CD4-positive, alpha-beta T cell (primary cell): ENCODE measurements at regions of chr11 and their contacts with region 1.

Region 1: GRCh38 chr11:128290106-128290840 is 297.1 kb downstream of the ETS1 start:
- DNase-seq: peak; percentile 51 to 93 (median 66)
- ATAC-seq: peak; percentile 73
- H3K4me3 ChIP-seq: peak overlapping the region; percentile 50
- H3K4me3 Mint-ChIP-seq: peak overlapping the region; percentile 90
- H3K27ac ChIP-seq: peak overlapping the region; percentile 87 to 95
- H3K27ac Mint-ChIP-seq: peak overlapping the region; percentile 100
- H3K4me1 ChIP-seq: peaks cover 77% of the 10 kb centered on the region
- H3K4me1 Mint-ChIP-seq: peaks cover 100% of the 10 kb centered on the region
- H3K27me3 ChIP-seq: no peaks in the 10 kb centered on the region
- H3K27me3 Mint-ChIP-seq: no peaks in the 10 kb centered on the region
- CTCF ChIP-seq: peak; percentile 94

Region 2: DNA sequence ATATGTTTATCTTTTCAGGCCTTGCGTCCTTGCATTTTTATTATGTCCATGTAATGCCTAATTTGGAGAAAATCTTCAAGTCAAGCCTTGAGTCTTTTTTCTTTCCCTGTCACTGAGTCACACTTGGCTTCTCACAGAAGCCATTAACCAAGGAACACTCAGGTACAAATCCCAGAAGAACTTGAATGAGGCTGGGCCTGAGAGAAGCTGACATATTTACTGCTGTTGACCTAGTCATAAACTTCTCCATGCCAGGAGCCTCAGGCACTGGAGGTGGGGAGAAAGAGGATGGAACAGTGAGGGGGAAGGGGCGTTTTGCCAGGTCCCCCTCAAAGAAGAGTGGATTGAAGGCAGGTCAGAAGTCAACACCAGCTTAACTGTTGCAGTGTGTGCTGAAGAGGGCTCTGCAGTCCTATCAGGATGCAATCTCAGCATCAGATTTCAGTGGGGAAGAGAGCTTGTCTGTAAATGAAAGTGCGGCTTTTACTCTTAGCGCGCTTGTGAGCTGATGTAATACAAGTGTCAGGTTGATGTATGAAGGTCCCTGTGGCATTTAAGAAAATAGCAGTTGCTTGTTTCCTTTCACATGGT is 228.9 kb before region 1 on chr11:
- CTCF ChIA-PET with region 1: no interaction called
- POLR2A ChIA-PET with region 1: no interaction called
- intact Hi-C with region 1: no loop called
- DNase-seq: peak in 1 of 14 experiments; percentile 8
- ATAC-seq: no peak
- H3K4me3 ChIP-seq: no peak overlapping the region
- H3K4me3 Mint-ChIP-seq: no peak overlapping the region
- H3K27ac ChIP-seq: no peak overlapping the region
- H3K27ac Mint-ChIP-seq: no peak overlapping the region
- H3K4me1 ChIP-seq: peaks cover 12% of the 10 kb centered on the region
- H3K4me1 Mint-ChIP-seq: peaks cover 5% of the 10 kb centered on the region
- H3K27me3 ChIP-seq: no peaks in the 10 kb centered on the region
- H3K27me3 Mint-ChIP-seq: no peaks in the 10 kb centered on the region
- CTCF ChIP-seq: no peak

Region 3: GRCh38 chr11:128195057-128195751 is 95.1 kb before region 1 on chr11:
- CTCF ChIA-PET with region 1: interaction called, 4 read pairs
- POLR2A ChIA-PET with region 1: no interaction called
- intact Hi-C with region 1: loop called in 1 of 2 experiments (anchors 5 kb)
- DNase-seq: peak in 13 of 14 experiments; percentile 9 to 86 (median 39)
- ATAC-seq: peak; percentile 98
- H3K4me3 ChIP-seq: no peak overlapping the region
- H3K4me3 Mint-ChIP-seq: peak overlapping the region; percentile 47
- H3K27ac ChIP-seq: peak overlapping the region in 1 of 2 donors; percentile 33
- H3K27ac Mint-ChIP-seq: peak overlapping the region; percentile 60
- H3K4me1 ChIP-seq: peaks cover 9% of the 10 kb centered on the region
- H3K4me1 Mint-ChIP-seq: peaks cover 35% of the 10 kb centered on the region
- H3K27me3 ChIP-seq: no peaks in the 10 kb centered on the region
- H3K27me3 Mint-ChIP-seq: no peaks in the 10 kb centered on the region
- CTCF ChIP-seq: peak; percentile 58

Region 4: DNA sequence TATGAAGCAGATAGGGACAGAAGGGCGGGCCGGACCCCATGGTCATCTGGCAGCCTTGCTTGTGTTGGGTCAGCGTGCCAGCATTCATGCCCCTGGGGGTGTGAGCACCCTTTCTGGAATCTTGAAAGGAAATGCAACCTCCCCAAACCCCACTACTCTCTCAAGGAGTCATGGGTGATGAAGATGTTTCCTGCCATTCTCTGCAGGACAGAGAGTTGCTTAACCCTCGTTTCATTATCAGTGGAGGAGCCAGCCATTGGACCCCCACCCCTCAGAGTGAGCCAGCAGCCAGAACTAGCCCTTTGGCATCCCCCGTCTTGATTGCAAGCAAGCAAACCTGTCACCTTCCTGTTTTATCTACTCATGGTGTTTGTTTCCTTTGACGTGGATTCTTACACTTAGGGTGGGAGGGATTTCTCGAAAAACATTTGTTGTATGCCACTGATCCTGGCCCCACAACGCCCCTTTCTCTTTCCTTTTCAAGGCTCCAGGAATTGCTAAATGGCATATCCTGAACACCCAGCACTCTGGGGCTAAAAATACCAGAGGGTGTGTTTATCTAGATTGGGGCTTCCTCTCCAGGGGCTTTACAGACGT is 38.8 kb after region 1 on chr11:
- CTCF ChIA-PET with region 1: interaction called, 37 read pairs
- POLR2A ChIA-PET with region 1: interaction called, 27 read pairs
- intact Hi-C with region 1: loop called (anchors 1 to 5 kb)
- DNase-seq: peak in 8 of 14 experiments; percentile 40 to 83 (median 54)
- ATAC-seq: peak; percentile 16
- H3K4me3 ChIP-seq: no peak overlapping the region
- H3K4me3 Mint-ChIP-seq: peak overlapping the region; percentile 60
- H3K27ac ChIP-seq: peak overlapping the region; percentile 65 to 78
- H3K27ac Mint-ChIP-seq: peak overlapping the region; percentile 93
- H3K4me1 ChIP-seq: peaks cover 67% of the 10 kb centered on the region
- H3K4me1 Mint-ChIP-seq: peaks cover 86% of the 10 kb centered on the region
- H3K27me3 ChIP-seq: no peaks in the 10 kb centered on the region
- H3K27me3 Mint-ChIP-seq: no peaks in the 10 kb centered on the region
- CTCF ChIP-seq: no peak

Region 5: GRCh38 chr11:128453444-128454336 is 163.4 kb after region 1 on chr11:
- CTCF ChIA-PET with region 1: interaction called, 8 read pairs
- POLR2A ChIA-PET with region 1: interaction called, 32 read pairs
- intact Hi-C with region 1: no loop called
- DNase-seq: peak in 2 of 14 experiments; percentile 25 to 32
- ATAC-seq: peak; percentile 65
- H3K4me3 ChIP-seq: no peak overlapping the region
- H3K4me3 Mint-ChIP-seq: peak overlapping the region; percentile 0
- H3K27ac ChIP-seq: peak overlapping the region; percentile 8 to 23
- H3K27ac Mint-ChIP-seq: peak overlapping the region; percentile 80
- H3K4me1 ChIP-seq: peaks cover 49% of the 10 kb centered on the region
- H3K4me1 Mint-ChIP-seq: peaks cover 84% of the 10 kb centered on the region
- H3K27me3 ChIP-seq: no peaks in the 10 kb centered on the region
- H3K27me3 Mint-ChIP-seq: no peaks in the 10 kb centered on the region
- CTCF ChIP-seq: no peak

Region 6: GRCh38 chr11:128482512-128483191 is 192.4 kb after region 1 on chr11:
- CTCF ChIA-PET with region 1: interaction called, 11 read pairs
- POLR2A ChIA-PET with region 1: interaction called, 212 read pairs
- intact Hi-C with region 1: no loop called
- DNase-seq: peak in 6 of 14 experiments; percentile 51 to 87 (median 70)
- ATAC-seq: peak; percentile 58
- H3K4me3 ChIP-seq: peak overlapping the region; percentile 46
- H3K4me3 Mint-ChIP-seq: peak overlapping the region; percentile 76
- H3K27ac ChIP-seq: peak overlapping the region; percentile 92 to 94
- H3K27ac Mint-ChIP-seq: peak overlapping the region; percentile 99
- H3K4me1 ChIP-seq: peaks cover 95% of the 10 kb centered on the region
- H3K4me1 Mint-ChIP-seq: peaks cover 99% of the 10 kb centered on the region
- H3K27me3 ChIP-seq: no peaks in the 10 kb centered on the region
- H3K27me3 Mint-ChIP-seq: no peaks in the 10 kb centered on the region
- CTCF ChIP-seq: no peak

Region 7: DNA sequence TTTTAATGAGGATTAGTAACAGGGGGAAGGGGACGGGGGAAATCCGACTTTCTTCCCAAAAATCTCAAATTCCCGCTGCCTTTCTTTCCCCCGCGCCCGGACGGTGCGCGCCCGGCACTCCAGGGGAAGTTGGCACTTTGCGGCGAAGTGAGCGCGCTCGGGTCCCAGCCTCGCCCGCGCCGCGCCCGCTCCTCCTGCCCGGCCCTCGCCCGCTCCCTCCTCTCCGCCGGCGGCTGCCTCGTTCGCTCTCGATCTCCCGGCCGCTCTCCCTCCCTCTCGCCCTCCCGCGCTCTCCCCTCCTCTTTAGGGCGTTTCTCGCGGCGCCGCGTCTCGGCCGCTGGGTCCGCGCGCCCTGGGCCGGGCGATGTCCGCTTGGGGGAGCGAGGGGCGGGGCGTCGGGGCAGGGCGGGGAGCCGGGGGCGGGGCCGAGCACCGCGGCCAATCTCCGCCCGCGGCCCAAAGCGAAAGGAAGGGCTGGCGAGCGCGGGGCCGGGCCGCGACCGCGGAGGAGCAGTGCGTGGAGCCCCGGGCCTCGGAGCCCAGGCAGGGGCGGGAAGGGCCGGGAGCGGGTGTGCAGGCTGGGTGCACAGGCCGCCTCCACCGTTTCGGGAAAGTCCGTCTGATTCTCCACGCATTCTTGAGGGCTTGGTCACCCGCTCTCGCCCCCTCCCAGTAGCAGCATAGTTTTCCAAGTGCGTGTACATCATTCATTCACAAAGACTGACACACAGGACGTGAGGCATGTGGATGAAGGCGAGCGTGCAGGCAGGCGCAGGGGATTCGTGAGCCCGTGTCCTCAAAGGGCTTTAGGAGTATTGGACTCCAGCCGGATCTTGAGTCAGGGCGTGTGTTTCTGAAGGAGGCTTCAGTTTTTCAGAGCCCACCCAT is 232.0 kb after region 1 on chr11:
- CTCF ChIA-PET with region 1: interaction called, 11 read pairs
- POLR2A ChIA-PET with region 1: interaction called, 78 read pairs
- intact Hi-C with region 1: no loop called
- DNase-seq: peak; percentile 73 to 95 (median 90)
- ATAC-seq: peak; percentile 47
- H3K4me3 ChIP-seq: peak overlapping the region; percentile 89
- H3K4me3 Mint-ChIP-seq: peak overlapping the region; percentile 93
- H3K27ac ChIP-seq: peak overlapping the region; percentile 83 to 96
- H3K27ac Mint-ChIP-seq: peak overlapping the region; percentile 99
- H3K4me1 ChIP-seq: peaks cover 41% of the 10 kb centered on the region
- H3K4me1 Mint-ChIP-seq: peaks cover 47% of the 10 kb centered on the region
- H3K27me3 ChIP-seq: no peaks in the 10 kb centered on the region
- H3K27me3 Mint-ChIP-seq: no peaks in the 10 kb centered on the region
- CTCF ChIP-seq: no peak

Region 8: GRCh38 chr11:128686745-128687177 is 396.5 kb after region 1 on chr11:
- CTCF ChIA-PET with region 1: no interaction called
- POLR2A ChIA-PET with region 1: no interaction called
- intact Hi-C with region 1: no loop called
- DNase-seq: peak in 13 of 14 experiments; percentile 34 to 78 (median 56)
- ATAC-seq: peak; percentile 89
- H3K4me3 ChIP-seq: peak overlapping the region; percentile 55
- H3K4me3 Mint-ChIP-seq: peak overlapping the region; percentile 90
- H3K27ac ChIP-seq: no peak overlapping the region
- H3K27ac Mint-ChIP-seq: no peak overlapping the region
- H3K4me1 ChIP-seq: peaks cover 41% of the 10 kb centered on the region
- H3K4me1 Mint-ChIP-seq: peaks cover 62% of the 10 kb centered on the region
- H3K27me3 ChIP-seq: peaks cover 25 to 40% of the 10 kb centered on the region in 2 experiments
- H3K27me3 Mint-ChIP-seq: peaks cover 53% of the 10 kb centered on the region
- CTCF ChIP-seq: no peak

Region 9: GRCh38 chr11:128757235-128757711 is 467.0 kb after region 1 on chr11:
- CTCF ChIA-PET with region 1: interaction called, 7 read pairs
- POLR2A ChIA-PET with region 1: no interaction called
- intact Hi-C with region 1: loop called (anchors 5 kb)
- DNase-seq: peak; percentile 40 to 90 (median 60)
- ATAC-seq: peak; percentile 99
- H3K4me3 ChIP-seq: no peak overlapping the region
- H3K4me3 Mint-ChIP-seq: peak overlapping the region; percentile 7
- H3K27ac ChIP-seq: no peak overlapping the region
- H3K27ac Mint-ChIP-seq: peak overlapping the region; percentile 63
- H3K4me1 ChIP-seq: peaks cover 80% of the 10 kb centered on the region
- H3K4me1 Mint-ChIP-seq: peaks cover 93% of the 10 kb centered on the region
- H3K27me3 ChIP-seq: no peaks in the 10 kb centered on the region
- H3K27me3 Mint-ChIP-seq: no peaks in the 10 kb centered on the region
- CTCF ChIP-seq: peak; percentile 74